ENCODE measurements at regions of chr7 and their contacts with region 1.

Region 1: DNA sequence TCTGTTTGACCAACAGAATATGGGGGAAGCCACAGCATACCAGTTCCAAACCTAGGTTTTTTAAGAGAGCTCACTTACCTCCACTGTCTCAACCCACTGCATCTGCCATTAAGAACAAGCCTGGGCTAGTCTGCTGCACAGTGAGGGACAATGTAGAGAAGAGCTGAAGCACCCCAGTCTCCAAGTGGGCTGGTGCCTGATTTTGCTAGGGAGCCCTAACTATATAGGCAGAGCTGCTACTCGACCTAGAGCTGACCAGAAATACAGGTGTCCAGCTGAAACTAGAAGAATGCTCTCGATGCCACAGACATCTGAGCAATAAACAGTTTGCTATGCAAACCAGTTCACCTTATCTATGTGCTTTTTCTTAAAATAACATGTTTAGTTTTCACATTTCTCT is 106.9 kb upstream of the BET1 start:
- DNase-seq: no peak
- ATAC-seq: no peak
- H3K4me3 ChIP-seq: no peak overlapping the region
- H3K27ac ChIP-seq: no peak overlapping the region
- H3K4me1 ChIP-seq: no peaks in the 10 kb centered on the region
- H3K27me3 ChIP-seq: no peaks in the 10 kb centered on the region
- CTCF ChIP-seq: no peak

Region 2: DNA sequence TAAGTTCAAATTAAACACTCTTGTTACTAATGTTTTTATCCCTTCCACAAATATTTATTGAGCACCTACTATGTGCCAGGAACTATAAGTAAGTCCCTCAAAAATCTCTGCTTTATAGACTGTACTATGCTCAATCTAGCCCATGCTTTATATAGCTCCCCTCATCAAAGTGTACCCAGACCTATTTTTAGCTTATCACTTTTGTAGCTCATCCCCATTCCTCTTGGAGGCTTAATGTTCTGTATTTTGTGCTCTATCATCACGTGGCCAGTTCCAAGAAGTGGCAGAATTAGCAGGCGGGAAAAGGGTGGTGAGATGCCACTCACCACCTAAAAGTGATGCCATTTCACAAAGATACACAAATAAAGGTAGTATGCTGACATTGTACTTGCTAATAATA is 31.3 kb after region 1 on chr7:
- CTCF ChIA-PET with region 1: no interaction called
- POLR2A ChIA-PET with region 1: no interaction called
- in situ Hi-C with region 1: no loop called
- intact Hi-C with region 1: loop called (anchors 1 kb)
- DNase-seq: no peak
- ATAC-seq: no peak
- H3K4me3 ChIP-seq: no peak overlapping the region
- H3K27ac ChIP-seq: no peak overlapping the region
- H3K4me1 ChIP-seq: no peaks in the 10 kb centered on the region
- H3K27me3 ChIP-seq: no peaks in the 10 kb centered on the region
- CTCF ChIP-seq: no peak

Region 3: DNA sequence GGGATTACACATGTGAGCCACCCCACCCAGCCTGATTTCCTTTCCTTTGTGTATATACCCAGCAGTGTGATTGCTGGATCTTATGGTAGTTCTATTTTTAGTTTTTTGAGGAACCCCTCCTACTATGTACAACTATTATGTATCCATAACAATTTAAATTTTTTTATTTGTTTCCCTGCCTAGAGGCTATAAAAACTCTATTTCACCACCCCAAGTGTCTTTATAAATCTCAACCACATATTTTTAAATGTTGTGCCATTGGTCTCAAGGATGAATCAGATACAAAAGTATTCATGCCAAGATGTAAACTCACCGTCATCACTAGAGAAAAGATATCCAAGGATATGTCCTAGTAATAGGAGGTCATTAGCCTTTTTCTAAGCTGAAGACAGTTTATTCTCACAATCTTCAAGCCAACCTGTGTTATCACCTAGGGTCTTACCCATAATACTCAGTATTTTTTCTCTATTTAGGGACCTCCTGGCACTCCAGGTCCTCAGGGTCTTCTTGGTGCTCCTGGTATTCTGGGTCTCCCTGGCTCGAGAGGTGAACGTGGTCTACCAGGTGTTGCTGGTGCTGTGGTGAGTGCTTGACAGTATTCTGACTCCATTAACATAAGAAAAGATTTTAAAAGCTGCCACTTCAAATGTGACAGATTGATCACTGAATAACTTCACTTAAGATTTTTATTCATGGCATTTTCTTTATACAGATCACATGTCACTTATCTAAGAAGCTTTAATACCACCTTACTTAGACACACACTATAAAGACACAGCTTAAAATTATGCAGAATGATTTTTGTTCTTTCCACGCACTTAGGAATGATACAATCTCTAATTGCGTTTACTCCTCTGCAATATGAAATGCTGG is 313.1 kb after region 1 on chr7:
- CTCF ChIA-PET with region 1: no interaction called
- POLR2A ChIA-PET with region 1: no interaction called
- in situ Hi-C with region 1: no loop called
- intact Hi-C with region 1: no loop called
- DNase-seq: no peak
- ATAC-seq: no peak
- H3K4me3 ChIP-seq: no peak overlapping the region
- H3K27ac ChIP-seq: no peak overlapping the region
- H3K4me1 ChIP-seq: no peaks in the 10 kb centered on the region
- H3K27me3 ChIP-seq: no peaks in the 10 kb centered on the region
- CTCF ChIP-seq: no peak